GM10248 (cell line): ENCODE measurements at regions of chr19 and their contacts with region 1.

Region 1: GRCh38 chr19:39428283-39429112 is 7.3 kb downstream of the RPS16 start:
- DNase-seq: no peak
- CTCF ChIP-seq: no peak

Region 2: DNA sequence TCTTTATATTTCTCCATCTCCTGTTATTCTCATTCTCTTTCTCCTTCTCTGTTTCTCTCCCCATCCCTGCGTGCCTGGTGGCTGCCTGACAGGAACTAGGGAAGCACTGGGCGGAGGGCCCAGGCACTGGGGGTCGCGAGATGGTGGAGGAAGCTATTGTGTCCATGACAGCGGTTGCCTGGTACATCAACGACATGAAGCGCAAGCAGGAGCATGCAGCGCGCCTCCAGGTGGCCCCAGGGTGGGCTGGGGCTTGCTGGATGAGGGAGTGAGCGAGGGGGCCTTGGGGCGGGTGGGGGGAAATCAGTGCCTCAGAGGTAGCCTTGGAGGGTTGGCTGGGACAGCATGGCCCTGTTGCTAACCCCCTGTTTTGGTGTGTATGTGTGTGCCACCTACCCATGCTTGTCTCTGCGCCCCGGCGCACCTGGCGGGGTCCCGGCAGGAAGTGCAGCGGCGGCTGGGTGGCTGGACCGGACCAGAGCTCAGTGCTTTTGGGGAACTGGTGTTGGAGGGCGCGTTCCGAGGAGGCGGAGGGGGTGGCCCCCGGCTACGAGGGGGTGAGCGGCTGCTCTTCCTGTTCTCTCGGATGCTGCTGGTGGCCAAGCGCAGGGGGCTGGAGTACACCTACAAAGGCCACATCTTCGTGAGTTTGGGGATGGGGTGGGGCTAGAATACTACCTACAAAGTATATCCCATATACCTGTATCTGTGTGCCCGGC is 10.9 kb before region 1 on chr19:
- CTCF ChIA-PET with region 1: interaction called, 15 read pairs
- POLR2A ChIA-PET with region 1: interaction called, 7 read pairs
- DNase-seq: no peak
- CTCF ChIP-seq: no peak